Mammary epithelial cell (primary cell): ENCODE measurements at regions of chr10 and their contacts with region 1.

Region 1: GRCh38 chr10:95246579-95247051 is 44.2 kb downstream of the PDLIM1 start:
- DNase-seq: peak; percentile 51
- H3K4me3 ChIP-seq: no peak overlapping the region
- H3K27ac ChIP-seq: peak overlapping the region; percentile 78
- H3K4me1 ChIP-seq: peaks cover 37% of the 10 kb centered on the region
- H3K27me3 ChIP-seq: no peaks in the 10 kb centered on the region
- CTCF ChIP-seq: peak; percentile 71 to 77

Region 2: DNA sequence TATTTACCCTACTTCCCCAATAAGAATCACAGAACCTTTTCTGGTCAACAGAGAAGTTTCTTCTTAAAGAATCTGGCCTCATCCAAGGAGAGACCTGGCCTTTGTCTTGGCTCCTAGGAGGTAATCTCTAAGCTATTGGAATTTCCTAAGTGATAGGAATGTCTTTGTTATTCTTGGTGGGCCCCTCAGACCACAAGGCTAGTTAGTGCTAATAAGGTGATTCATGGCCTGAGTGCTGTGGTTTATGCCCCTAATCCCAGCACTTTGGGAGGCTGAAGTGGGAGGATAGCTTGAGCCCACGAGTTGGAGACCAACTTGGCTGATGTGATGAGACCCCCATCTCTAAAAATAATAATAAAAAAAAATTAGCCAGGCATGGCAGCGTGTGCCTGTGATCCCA is 623.0 kb before region 1 on chr10:
- CTCF ChIA-PET with region 1: no interaction called
- dilution Hi-C with region 1: no loop called
- in situ Hi-C with region 1: no loop called
- intact Hi-C with region 1: loop called (anchors 5 kb)
- DNase-seq: no peak
- H3K4me3 ChIP-seq: no peak overlapping the region
- H3K27ac ChIP-seq: no peak overlapping the region
- H3K4me1 ChIP-seq: no peaks in the 10 kb centered on the region
- H3K27me3 ChIP-seq: no peaks in the 10 kb centered on the region
- CTCF ChIP-seq: no peak

Region 3: DNA sequence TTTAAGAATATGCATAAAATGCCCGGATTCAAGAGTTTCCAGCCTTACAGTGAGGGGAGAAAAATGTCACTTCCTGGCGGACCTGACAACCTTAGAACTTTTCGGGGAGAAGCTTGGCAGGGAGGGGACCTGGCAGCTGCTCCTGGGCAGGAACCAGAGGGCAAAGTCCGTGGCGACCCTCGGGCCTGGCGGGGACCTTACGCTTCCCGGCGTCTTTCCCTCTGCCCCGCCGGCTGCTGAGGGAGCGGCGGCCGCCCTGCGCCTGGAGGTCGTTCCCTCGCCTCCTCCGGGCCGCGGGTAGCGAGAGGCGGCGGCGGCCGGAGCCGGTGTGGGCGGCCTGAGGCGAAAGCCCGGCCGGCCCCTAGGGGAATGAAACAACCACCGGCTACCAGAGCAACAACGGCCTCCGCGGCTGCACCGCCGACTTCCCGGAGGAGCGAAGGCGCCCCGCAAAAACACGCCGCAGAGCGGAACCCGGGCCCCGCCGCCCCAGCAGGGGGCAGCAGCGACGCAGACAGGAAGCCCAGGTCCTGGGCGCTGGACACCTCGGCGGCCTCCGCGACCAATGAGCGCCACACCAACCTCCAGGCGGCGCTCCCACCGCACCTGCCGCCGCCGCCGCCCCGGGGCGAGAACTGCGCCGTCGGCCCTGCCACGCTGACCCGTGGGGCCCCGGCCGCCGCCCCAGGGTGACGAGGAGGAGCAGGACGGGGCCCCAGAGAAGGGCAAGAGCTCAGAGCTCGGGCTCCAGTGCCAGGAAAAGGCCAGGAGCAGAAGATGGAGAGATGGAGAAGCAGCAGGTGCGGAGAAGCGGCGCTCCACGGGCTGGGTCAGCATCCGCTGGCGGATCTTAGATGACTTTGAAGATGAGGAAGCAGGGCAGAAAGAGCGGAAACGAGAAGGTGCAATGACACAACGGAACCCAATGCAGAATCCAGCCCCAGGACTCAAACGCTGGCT is 63.1 kb before region 1 on chr10:
- CTCF ChIA-PET with region 1: no interaction called
- dilution Hi-C with region 1: no loop called
- in situ Hi-C with region 1: no loop called
- intact Hi-C with region 1: loop called (anchors 1 kb)
- DNase-seq: peak; percentile 70
- H3K4me3 ChIP-seq: peak overlapping the region; percentile 58 to 66 (median 66)
- H3K27ac ChIP-seq: no peak overlapping the region
- H3K4me1 ChIP-seq: peaks cover 4% of the 10 kb centered on the region
- H3K27me3 ChIP-seq: no peaks in the 10 kb centered on the region
- CTCF ChIP-seq: peak; percentile 49 to 74

Region 4: GRCh38 chr10:95208702-95209391 is 37.8 kb before region 1 on chr10:
- CTCF ChIA-PET with region 1: interaction called, 3 read pairs
- dilution Hi-C with region 1: no loop called
- in situ Hi-C with region 1: loop called (anchors 5 kb)
- intact Hi-C with region 1: loop called (anchors 1 kb)
- DNase-seq: no peak
- H3K4me3 ChIP-seq: no peak overlapping the region
- H3K27ac ChIP-seq: no peak overlapping the region
- H3K4me1 ChIP-seq: peaks cover 7% of the 10 kb centered on the region
- H3K27me3 ChIP-seq: no peaks in the 10 kb centered on the region
- CTCF ChIP-seq: peak; percentile 12 to 46

Region 5: DNA sequence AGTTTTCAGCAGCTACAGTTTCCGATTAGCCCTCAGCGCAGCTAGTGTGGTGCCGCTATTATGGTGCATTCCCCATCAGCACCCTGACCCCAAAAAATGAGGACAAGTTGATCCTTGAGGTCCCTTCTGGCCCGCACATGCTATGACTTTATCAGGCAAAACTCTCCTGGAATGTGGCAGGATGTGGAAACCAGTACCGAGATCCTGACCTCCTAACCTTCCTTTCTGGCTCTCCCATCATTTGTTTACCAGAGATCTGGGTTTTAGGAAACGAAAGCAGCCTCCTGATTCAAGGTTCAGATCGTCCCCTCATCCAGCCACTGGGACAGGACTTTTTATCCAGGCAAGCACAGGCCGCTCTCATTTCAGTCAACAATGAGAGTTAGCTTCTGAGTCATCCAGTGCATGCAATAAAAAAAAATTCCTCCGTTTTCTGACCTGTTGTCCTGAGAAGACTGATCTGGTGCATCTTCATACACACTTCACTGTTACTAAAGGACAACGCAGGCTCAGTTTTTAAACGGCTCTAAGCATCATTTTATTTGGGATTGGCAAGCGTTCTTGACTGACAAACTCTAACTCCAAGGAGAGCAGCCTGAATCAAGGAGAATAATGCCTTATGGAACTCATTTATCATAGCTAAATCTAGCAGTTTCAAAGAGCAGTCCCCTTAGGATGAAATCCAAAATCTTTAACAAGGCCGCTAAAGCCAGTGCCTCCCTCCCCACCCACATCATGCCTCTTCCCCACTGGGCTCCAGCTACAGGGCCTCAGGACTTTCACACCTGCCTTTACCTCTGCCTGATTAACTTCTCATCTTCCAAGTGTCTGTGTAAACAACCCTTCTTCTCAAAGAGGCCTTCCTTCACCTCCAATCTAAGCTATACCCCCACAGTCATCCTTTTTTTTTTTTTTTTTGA is 27.0 kb after region 1 on chr10:
- CTCF ChIA-PET with region 1: no interaction called
- dilution Hi-C with region 1: no loop called
- in situ Hi-C with region 1: no loop called
- intact Hi-C with region 1: loop called (anchors 2 kb)
- DNase-seq: peak; percentile 87
- H3K4me3 ChIP-seq: peak overlapping the region in 2 of 3 experiments; percentile 4 to 35
- H3K27ac ChIP-seq: peak overlapping the region; percentile 88
- H3K4me1 ChIP-seq: peaks cover 63% of the 10 kb centered on the region
- H3K27me3 ChIP-seq: no peaks in the 10 kb centered on the region
- CTCF ChIP-seq: no peak

Region 6: DNA sequence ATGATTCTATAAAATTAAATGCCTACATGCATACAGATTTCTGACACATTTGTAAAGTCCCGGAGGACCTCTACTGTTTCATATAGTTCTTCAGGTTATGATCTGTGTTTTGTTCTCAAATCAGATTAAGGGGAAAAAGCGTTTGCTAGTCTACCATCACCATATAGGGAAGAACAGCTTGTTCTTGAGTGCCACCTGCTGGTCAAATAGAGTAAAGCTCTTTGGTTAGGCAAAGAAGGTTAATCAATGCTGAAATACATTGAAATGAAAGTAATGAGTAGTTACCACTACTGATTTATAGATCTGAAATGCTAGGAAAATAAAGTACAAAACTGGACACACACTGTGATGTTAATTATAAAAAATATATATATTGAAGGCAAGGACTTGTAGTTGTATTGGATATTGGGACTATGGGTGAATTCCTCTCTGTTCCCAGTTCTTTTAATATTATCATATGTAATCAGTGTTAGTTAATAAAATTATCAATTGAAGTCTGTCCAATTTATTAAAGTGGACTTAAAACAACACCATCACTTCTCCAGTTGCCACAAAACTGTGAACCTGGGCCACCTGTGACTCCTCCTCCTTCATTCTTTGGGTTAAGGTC is 116.8 kb after region 1 on chr10:
- CTCF ChIA-PET with region 1: interaction called, 6 read pairs
- dilution Hi-C with region 1: no loop called
- in situ Hi-C with region 1: loop called (anchors 5 kb)
- intact Hi-C with region 1: loop called (anchors 1 kb)
- DNase-seq: peak; percentile 52
- H3K4me3 ChIP-seq: no peak overlapping the region
- H3K27ac ChIP-seq: no peak overlapping the region
- H3K4me1 ChIP-seq: peaks cover 19% of the 10 kb centered on the region
- H3K27me3 ChIP-seq: no peaks in the 10 kb centered on the region
- CTCF ChIP-seq: peak; percentile 85 to 94